Natural killer cell (primary cell): ENCODE measurements at regions of chr15 and their contacts with region 1.

Region 1: DNA sequence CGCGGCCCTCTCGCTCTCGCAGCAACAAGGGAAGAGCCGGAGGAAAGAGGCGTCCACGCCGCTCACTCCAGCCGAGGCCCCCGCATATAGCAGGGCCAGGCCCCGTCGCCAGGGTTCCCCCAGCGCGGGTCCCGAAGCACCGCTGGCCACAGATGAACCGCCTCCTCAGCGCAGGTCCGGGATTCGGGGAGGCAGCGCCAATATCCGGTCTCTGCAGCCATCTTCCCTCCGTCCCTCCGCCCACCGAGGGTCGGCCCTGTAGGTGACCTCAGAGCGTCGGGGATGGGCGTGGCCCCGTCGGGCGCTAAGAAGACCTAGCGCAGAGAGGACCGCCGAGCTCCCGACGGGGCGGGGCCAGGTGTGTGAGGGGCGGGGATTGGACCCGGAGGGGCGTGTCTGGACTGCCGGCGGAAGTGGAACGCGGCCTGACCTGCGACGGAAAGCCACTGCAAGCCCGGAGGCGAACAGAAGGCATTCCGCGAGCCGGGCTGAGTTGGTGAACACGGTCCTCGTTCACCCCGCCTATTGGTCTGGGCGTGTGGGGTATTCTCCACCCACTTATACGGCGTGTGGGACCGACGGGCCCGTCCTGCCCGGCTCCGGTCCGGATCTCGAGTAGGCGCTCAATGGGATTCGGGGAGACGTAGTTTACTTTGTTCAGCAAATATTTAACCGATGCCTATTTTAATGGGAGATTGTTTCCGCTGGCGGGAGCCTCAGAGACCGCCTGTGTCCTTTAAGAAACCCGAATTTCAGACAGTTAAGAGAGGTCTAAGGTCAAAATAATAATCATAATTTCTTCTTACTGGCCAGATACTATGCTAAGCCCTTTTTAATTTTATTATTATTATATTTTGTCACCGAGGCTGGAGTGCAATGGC is 26.9 kb upstream of the MTHFS start:
- DNase-seq: peak; percentile 99
- ATAC-seq: peak; percentile 91 to 99 (median 91)
- H3K4me3 ChIP-seq: peak overlapping the region; percentile 99
- H3K4me3 Mint-ChIP-seq: peak overlapping the region; percentile 96
- H3K27ac ChIP-seq: peak overlapping the region; percentile 99
- H3K27ac Mint-ChIP-seq: peak overlapping the region; percentile 96 to 100
- H3K4me1 ChIP-seq: peaks cover 13% of the 10 kb centered on the region
- H3K4me1 Mint-ChIP-seq: peaks cover 27 to 28% of the 10 kb centered on the region in 2 donors
- H3K27me3 ChIP-seq: no peaks in the 10 kb centered on the region
- H3K27me3 Mint-ChIP-seq: peaks cover 3 to 4% of the 10 kb centered on the region in 2 donors
- CTCF ChIP-seq: no peak

Region 2: DNA sequence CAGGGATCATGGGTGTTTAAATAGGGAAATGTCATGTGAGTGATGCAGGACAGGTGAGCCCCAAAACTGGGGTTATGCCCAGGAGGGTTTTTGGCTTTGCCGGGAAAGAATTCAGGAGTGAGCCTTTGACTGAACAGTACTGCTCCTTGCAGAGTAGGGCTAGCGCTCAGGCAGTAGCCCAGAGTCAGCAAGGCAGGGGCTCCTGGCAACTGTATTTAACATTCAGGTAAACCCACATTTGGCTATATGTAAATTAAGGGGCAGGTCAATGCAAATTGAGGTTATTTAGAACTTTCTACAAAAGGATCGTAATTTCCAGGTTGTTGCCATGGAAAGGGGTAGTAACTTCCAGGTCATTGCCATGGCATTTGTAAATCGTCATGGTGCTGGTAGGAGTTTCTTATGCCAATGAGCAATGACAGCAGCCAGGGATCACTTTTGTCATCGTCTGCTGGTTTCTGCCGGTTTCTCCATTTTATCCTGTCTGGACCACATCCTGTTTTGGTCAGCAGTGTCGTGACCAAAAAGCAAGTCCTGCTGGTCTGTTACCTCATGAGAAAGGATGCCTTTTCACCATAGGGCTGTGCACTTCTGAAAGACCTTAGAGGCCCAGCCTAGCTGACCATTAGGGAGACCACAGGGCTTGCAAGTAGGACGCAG is 51.3 kb before region 1 on chr15:
- intact Hi-C with region 1: loop called (anchors 2 kb)
- DNase-seq: peak; percentile 39 to 71
- ATAC-seq: peak; percentile 86 to 89 (median 88)
- H3K4me3 ChIP-seq: no peak overlapping the region
- H3K4me3 Mint-ChIP-seq: no peak overlapping the region
- H3K27ac ChIP-seq: peak overlapping the region; percentile 30
- H3K27ac Mint-ChIP-seq: peak overlapping the region; percentile 58 to 87
- H3K4me1 ChIP-seq: peaks cover 14% of the 10 kb centered on the region
- H3K4me1 Mint-ChIP-seq: peaks cover 19% of the 10 kb centered on the region in 2 donors
- H3K27me3 ChIP-seq: no peaks in the 10 kb centered on the region
- H3K27me3 Mint-ChIP-seq: no peaks in the 10 kb centered on the region
- CTCF ChIP-seq: no peak

Region 3: DNA sequence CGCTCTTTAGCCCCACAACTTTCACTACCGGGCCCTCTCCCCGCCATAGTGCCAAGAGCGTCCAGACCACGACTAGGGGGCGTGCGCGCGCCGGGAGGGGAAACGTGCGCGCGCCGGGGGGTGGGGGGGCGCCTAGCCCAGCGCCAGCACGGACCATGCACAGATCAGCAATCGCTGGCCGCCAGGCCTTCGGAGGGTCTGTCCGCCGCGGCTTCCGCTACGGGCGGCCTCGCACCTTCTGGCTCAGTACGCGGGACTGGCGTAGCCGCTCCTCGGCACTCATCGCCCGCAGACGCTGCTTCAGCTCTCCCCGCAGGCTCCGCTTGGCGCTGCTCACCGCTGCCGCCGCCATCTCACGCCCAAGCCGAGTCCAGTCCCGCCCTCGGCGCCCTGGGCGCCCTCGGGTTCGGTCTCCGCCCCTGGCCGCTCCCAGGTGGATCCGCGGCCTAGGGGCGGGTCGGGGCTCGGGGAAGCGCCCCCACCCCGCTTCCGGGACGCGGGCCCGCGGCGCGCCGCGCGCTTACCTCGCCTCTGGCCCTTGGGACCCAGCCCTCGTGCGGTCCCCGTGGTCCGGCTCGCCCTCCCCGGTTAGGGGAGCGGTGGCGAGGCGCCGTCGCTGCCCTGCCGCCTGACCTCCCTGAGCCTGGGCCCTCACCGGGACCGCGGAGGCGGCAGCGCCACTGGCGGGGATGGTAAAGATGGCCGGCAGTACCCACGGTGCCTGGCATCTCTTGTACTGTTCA is 26.9 kb before region 1 on chr15 and contains the start of gene MTHFS:
- intact Hi-C with region 1: loop called (anchors 1 kb)
- DNase-seq: peak; percentile 71 to 90
- ATAC-seq: peak; percentile 80 to 92 (median 85)
- H3K4me3 ChIP-seq: peak within 1 kb of the TSS; percentile 54
- H3K4me3 Mint-ChIP-seq: peak within 1 kb of the TSS; percentile 97
- H3K27ac ChIP-seq: peak within 1 kb of the TSS; percentile 93
- H3K27ac Mint-ChIP-seq: peak within 1 kb of the TSS; percentile 95 to 96
- H3K4me1 ChIP-seq: peaks cover 17% of the 10 kb centered on the region
- H3K4me1 Mint-ChIP-seq: peaks cover 17 to 34% of the 10 kb centered on the region in 2 donors
- H3K27me3 ChIP-seq: no peaks in the 10 kb centered on the region
- H3K27me3 Mint-ChIP-seq: no peaks in the 10 kb centered on the region
- CTCF ChIP-seq: peak; percentile 38
- total RNA-seq, gene MTHFS: 7.0 to 10.8 (median 10.5) TPM

Region 4: GRCh38 chr15:79965846-79966630 is 42.3 kb after region 1 on chr15:
- intact Hi-C with region 1: loop called (anchors 5 kb)
- DNase-seq: peak in 1 of 2 donors; percentile 70
- ATAC-seq: peak; percentile 48 to 68 (median 53)
- H3K4me3 ChIP-seq: no peak overlapping the region
- H3K4me3 Mint-ChIP-seq: peak overlapping the region; percentile 14
- H3K27ac ChIP-seq: peak overlapping the region; percentile 52
- H3K27ac Mint-ChIP-seq: peak overlapping the region; percentile 57 to 74
- H3K4me1 ChIP-seq: peaks cover 19% of the 10 kb centered on the region
- H3K4me1 Mint-ChIP-seq: peaks cover 24 to 39% of the 10 kb centered on the region in 2 donors
- H3K27me3 ChIP-seq: no peaks in the 10 kb centered on the region
- H3K27me3 Mint-ChIP-seq: no peaks in the 10 kb centered on the region
- CTCF ChIP-seq: no peak

Region 5: DNA sequence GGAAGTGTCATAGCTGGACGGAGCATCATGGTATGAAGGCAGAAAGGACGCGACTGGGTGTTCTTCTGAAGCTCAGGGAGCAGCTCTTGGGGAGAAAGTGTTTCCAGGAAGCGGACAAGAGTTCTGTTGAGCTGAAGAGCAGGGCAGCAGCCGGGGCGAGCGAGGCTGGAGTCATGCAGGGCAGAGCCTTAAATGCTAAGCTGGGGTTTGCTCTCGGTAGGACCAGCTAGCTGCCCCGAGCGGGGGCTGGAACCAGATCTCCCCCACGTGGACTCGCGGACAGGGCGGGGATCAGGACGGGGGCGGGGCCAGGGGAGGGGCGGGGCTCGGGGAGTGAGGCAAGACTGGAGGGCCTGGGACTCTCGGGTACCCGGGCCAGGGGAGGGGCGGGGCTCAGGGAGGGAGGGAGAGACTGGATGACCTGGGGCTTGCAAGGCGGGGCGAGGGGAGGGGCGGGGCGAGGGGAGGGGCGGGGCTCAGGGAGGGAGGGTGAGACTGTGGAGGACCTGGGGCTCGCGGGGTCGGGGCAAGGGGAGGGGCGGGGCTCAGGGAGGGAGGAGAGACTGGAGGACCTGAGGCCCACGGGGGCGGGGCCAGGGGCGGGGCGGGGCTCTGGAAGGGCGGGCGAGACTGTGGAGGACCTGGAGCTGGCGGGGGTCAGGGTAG is 228.6 kb after region 1 on chr15:
- intact Hi-C with region 1: loop called (anchors 1 kb)
- DNase-seq: peak; percentile 49 to 89
- ATAC-seq: peak; percentile 68 to 86 (median 76)
- H3K4me3 ChIP-seq: peak overlapping the region; percentile 86
- H3K4me3 Mint-ChIP-seq: peak overlapping the region; percentile 87
- H3K27ac ChIP-seq: peak overlapping the region; percentile 65
- H3K27ac Mint-ChIP-seq: peak overlapping the region; percentile 81 to 88
- H3K4me1 ChIP-seq: peaks cover 29% of the 10 kb centered on the region
- H3K4me1 Mint-ChIP-seq: peaks cover 21 to 25% of the 10 kb centered on the region in 2 donors
- H3K27me3 ChIP-seq: no peaks in the 10 kb centered on the region
- H3K27me3 Mint-ChIP-seq: no peaks in the 10 kb centered on the region
- CTCF ChIP-seq: no peak

Region 6: DNA sequence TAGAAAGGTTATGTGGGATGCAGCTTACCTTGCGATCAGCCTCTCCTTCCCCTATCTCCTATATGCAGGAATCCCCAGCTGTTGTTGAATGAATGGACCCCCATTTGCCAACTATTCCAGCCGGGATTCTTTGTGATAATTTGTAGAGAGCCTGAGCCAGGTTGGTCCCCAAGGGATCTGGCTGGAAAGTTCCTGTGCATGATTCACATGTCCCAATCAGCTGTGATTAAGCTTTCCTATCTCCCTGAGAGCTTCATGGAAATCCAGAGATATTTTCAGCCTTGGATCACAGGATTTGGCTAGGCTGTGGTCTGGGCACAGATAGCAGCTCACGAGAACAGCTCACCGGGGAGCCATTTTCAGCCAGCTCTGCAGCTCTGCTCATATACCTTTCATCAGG is 557.2 kb after region 1 on chr15:
- intact Hi-C with region 1: no loop called
- DNase-seq: no peak
- ATAC-seq: no peak
- H3K4me3 ChIP-seq: no peak overlapping the region
- H3K4me3 Mint-ChIP-seq: no peak overlapping the region
- H3K27ac ChIP-seq: no peak overlapping the region
- H3K27ac Mint-ChIP-seq: no peak overlapping the region
- H3K4me1 ChIP-seq: no peaks in the 10 kb centered on the region
- H3K4me1 Mint-ChIP-seq: no peaks in the 10 kb centered on the region
- H3K27me3 ChIP-seq: no peaks in the 10 kb centered on the region
- H3K27me3 Mint-ChIP-seq: no peaks in the 10 kb centered on the region
- CTCF ChIP-seq: no peak